B cell (primary cell): ENCODE measurements at regions of chr5 and their contacts with region 1.

Region 1: GRCh38 chr5:98796197-98796972 is 22.9 kb downstream of the RGMB start:
- DNase-seq: peak; percentile 66
- ATAC-seq: peak; percentile 70
- H3K4me3 ChIP-seq: no peak overlapping the region
- H3K4me3 Mint-ChIP-seq: no peak overlapping the region
- H3K27ac ChIP-seq: no peak overlapping the region
- H3K27ac Mint-ChIP-seq: no peak overlapping the region
- H3K4me1 ChIP-seq: no peaks in the 10 kb centered on the region
- H3K4me1 Mint-ChIP-seq: peaks cover 3% of the 10 kb centered on the region
- H3K27me3 ChIP-seq: no peaks in the 10 kb centered on the region
- H3K27me3 Mint-ChIP-seq: no peaks in the 10 kb centered on the region
- CTCF ChIP-seq: peak; percentile 85

Region 2: GRCh38 chr5:98786191-98786853 is 10.1 kb before region 1 on chr5:
- CTCF ChIA-PET with region 1: interaction called, 19 read pairs
- POLR2A ChIA-PET with region 1: no interaction called
- intact Hi-C with region 1: no loop called
- DNase-seq: no peak
- ATAC-seq: no peak
- H3K4me3 ChIP-seq: no peak overlapping the region
- H3K4me3 Mint-ChIP-seq: no peak overlapping the region
- H3K27ac ChIP-seq: no peak overlapping the region
- H3K27ac Mint-ChIP-seq: no peak overlapping the region
- H3K4me1 ChIP-seq: no peaks in the 10 kb centered on the region
- H3K4me1 Mint-ChIP-seq: peaks cover 30% of the 10 kb centered on the region
- H3K27me3 ChIP-seq: no peaks in the 10 kb centered on the region
- H3K27me3 Mint-ChIP-seq: no peaks in the 10 kb centered on the region
- CTCF ChIP-seq: no peak

Region 3: DNA sequence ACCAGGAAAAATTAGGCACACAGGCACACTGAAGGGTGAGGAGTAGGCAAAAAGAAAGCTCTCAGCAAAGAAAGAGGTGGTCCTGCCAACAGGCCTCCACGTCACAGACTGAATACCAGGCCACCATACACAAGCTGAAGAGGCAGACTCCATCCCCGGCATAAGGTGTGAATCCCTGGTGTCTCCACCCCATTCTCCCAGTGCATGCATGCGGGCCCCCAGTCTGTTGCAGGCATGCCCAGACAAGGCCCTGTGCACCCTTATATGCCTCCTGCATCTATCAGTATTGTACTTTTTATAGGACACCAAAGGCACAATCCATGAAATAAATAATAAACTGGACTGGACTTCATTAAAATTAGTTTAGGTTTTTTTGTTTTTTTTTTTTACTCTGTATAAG is 50.1 kb after region 1 on chr5:
- CTCF ChIA-PET with region 1: no interaction called
- POLR2A ChIA-PET with region 1: no interaction called
- intact Hi-C with region 1: no loop called
- DNase-seq: no peak
- ATAC-seq: no peak
- H3K4me3 ChIP-seq: no peak overlapping the region
- H3K4me3 Mint-ChIP-seq: no peak overlapping the region
- H3K27ac ChIP-seq: no peak overlapping the region
- H3K27ac Mint-ChIP-seq: no peak overlapping the region
- H3K4me1 ChIP-seq: no peaks in the 10 kb centered on the region
- H3K4me1 Mint-ChIP-seq: no peaks in the 10 kb centered on the region
- H3K27me3 ChIP-seq: no peaks in the 10 kb centered on the region
- H3K27me3 Mint-ChIP-seq: no peaks in the 10 kb centered on the region
- CTCF ChIP-seq: no peak

Region 4: DNA sequence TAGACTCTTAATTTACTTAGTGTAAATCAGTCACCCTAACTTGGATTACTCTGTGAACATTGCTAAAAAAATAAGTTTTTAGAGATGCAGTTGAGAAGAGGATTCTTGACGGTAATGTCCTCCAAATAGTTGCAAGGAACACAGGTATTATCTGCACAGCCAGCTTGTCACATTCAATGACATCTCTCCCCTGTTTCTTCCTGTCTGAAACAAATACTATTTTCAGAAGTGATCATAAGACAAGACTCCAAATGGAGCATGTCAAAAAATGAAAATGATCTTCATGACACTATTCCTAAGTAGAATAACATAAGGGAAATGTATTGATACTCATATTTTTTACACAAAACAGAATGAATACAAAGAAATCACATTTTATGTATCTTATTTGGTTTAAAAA is 360.3 kb after region 1 on chr5:
- CTCF ChIA-PET with region 1: no interaction called
- POLR2A ChIA-PET with region 1: no interaction called
- intact Hi-C with region 1: no loop called
- DNase-seq: no peak
- ATAC-seq: no peak
- H3K4me3 ChIP-seq: no peak overlapping the region
- H3K4me3 Mint-ChIP-seq: no peak overlapping the region
- H3K27ac ChIP-seq: no peak overlapping the region
- H3K27ac Mint-ChIP-seq: no peak overlapping the region
- H3K4me1 ChIP-seq: no peaks in the 10 kb centered on the region
- H3K4me1 Mint-ChIP-seq: no peaks in the 10 kb centered on the region
- H3K27me3 ChIP-seq: no peaks in the 10 kb centered on the region
- H3K27me3 Mint-ChIP-seq: peaks cover 6% of the 10 kb centered on the region
- CTCF ChIP-seq: no peak